Natural killer cell (primary cell): ENCODE measurements at regions of chr22 and their contacts with region 1.

Region 1: DNA sequence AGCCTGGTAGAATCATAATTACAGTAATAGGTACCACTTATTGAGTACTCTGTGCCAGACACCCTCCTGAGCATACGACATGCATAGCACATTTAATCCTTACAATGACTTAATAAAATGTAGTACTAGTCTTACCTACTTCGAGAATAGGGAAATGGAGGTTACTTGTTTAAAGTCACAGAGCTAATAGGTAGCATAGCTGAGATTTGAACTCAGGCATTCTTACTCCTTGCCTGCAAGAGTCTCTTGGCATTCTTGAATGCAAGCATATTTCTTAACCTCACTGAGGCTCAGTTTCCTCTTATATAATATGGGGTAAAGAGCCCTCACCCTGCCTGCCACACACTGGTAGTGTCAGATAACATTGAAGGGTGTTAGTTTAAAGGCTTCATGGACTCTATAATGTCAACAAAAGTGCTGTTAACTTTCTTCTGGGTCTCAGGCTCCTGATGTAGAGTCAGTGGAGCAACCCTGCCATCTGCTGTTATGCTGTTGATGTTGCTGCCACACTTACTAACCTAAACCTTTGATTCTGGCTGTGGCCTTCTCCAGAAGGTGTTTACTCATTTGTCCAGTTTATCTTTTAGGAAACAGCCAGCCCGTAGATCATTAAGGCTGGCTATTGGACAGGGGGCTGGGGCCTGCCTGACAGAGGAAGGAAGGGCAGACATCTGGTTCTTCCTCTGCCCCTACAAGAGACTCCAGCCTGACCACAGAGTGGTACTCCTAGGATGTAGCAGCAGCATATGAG is 18.9 kb downstream of the LIMK2 start:
- DNase-seq: peak; percentile 45 to 84
- ATAC-seq: peak; percentile 84 to 86 (median 84)
- H3K4me3 ChIP-seq: no peak overlapping the region
- H3K4me3 Mint-ChIP-seq: peak overlapping the region; percentile 32
- H3K27ac ChIP-seq: peak overlapping the region; percentile 83
- H3K27ac Mint-ChIP-seq: peak overlapping the region; percentile 85 to 87
- H3K4me1 ChIP-seq: peaks cover 33% of the 10 kb centered on the region
- H3K4me1 Mint-ChIP-seq: peaks cover 32 to 44% of the 10 kb centered on the region in 2 donors
- H3K27me3 ChIP-seq: no peaks in the 10 kb centered on the region
- H3K27me3 Mint-ChIP-seq: no peaks in the 10 kb centered on the region
- CTCF ChIP-seq: peak; percentile 74

Region 2: GRCh38 chr22:30634471-30635233 is 596.4 kb before region 1 on chr22:
- intact Hi-C with region 1: loop called (anchors 1 kb)
- DNase-seq: peak; percentile 85 to 94
- ATAC-seq: peak; percentile 64 to 79 (median 66)
- H3K4me3 ChIP-seq: peak overlapping the region; percentile 49
- H3K4me3 Mint-ChIP-seq: peak overlapping the region; percentile 84
- H3K27ac ChIP-seq: peak overlapping the region; percentile 85
- H3K27ac Mint-ChIP-seq: peak overlapping the region; percentile 92 to 95
- H3K4me1 ChIP-seq: peaks cover 33% of the 10 kb centered on the region
- H3K4me1 Mint-ChIP-seq: peaks cover 7 to 25% of the 10 kb centered on the region in 2 donors
- H3K27me3 ChIP-seq: no peaks in the 10 kb centered on the region
- H3K27me3 Mint-ChIP-seq: no peaks in the 10 kb centered on the region
- CTCF ChIP-seq: peak; percentile 82

Region 3: DNA sequence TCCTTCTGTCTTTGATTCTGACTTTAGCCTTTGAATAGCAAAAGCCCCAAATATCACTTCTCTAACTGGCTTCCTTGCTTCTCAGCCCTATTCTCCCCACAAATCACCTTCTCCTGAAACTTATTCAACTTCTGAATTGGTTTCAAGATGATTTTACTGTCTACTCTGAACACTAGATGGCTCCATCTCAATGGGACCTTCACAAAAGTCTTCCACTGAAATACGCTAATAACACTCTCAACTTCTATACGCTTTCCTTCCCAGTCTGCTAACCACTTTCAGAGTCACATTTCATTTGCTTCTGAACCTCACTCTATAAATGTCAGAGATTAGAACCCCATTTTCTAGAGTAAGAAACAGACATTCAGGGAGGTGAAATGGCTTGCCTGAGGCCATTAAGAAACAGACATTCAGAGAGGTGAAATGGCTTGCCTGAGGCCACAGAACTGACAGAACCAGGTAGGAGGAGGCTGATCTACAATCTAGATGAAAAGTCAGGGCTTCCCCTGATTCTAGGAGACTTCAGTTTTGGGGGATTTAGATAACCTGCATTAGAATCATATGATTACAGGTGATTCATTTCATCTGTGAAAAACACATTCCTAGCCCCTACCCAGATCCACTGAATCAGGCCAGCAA is 283.1 kb before region 1 on chr22:
- intact Hi-C with region 1: loop called (anchors 5 kb)
- DNase-seq: peak in 1 of 2 donors; percentile 66
- ATAC-seq: peak in 2 of 3 donors; percentile 40 to 52
- H3K4me3 ChIP-seq: no peak overlapping the region
- H3K4me3 Mint-ChIP-seq: no peak overlapping the region
- H3K27ac ChIP-seq: no peak overlapping the region
- H3K27ac Mint-ChIP-seq: no peak overlapping the region
- H3K4me1 ChIP-seq: peaks cover 10% of the 10 kb centered on the region
- H3K4me1 Mint-ChIP-seq: peaks cover 22 to 23% of the 10 kb centered on the region in 2 donors
- H3K27me3 ChIP-seq: no peaks in the 10 kb centered on the region
- H3K27me3 Mint-ChIP-seq: no peaks in the 10 kb centered on the region
- CTCF ChIP-seq: peak; percentile 29

Region 4: DNA sequence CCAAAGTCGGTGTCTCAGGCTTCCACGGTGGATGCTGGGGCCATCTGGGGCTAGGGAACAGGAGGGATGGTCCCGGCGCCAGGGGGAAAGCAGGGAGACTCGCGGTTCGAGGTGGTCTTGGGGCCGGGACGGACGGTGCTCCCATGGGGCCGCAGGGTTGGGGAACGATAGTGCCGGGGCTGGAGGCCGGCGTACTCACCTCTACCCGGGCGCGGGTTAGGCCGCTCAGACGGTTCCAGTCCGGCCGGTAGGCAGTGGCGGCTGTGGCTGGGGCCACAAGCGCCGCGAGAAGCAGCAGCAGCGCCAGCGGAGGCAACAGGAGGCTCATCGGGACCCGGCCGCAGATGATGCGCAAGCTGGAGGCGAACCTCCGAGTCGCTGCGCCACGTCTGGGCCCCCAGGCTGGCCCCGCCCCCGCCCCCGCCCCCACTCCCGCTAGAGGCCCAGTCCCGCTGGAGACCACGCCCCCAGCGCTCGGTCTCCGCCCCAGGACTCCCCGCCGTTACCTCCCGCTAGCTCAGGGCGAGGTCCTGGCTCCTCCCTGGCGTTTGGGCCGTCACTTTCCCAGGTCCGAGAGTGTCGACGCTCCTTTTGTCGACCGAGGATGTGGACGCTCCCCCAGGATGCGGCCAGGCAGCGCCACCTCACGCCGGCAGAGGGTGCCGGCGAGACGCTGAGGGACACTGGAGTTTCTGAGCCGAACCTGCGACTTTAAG is 123.7 kb before region 1 on chr22 and contains the start of gene SELENOM:
- intact Hi-C with region 1: loop called (anchors 1 kb)
- DNase-seq: peak; percentile 80 to 94
- ATAC-seq: peak; percentile 94 to 96 (median 96)
- H3K4me3 ChIP-seq: peak within 1 kb of the TSS; percentile 86
- H3K4me3 Mint-ChIP-seq: peak within 1 kb of the TSS; percentile 87
- H3K27ac ChIP-seq: peak within 1 kb of the TSS; percentile 34
- H3K27ac Mint-ChIP-seq: peak within 1 kb of the TSS; percentile 78 to 91
- H3K4me1 ChIP-seq: peaks cover 17% of the 10 kb centered on the region
- H3K4me1 Mint-ChIP-seq: peaks cover 7 to 18% of the 10 kb centered on the region in 2 donors
- H3K27me3 ChIP-seq: no peaks in the 10 kb centered on the region
- H3K27me3 Mint-ChIP-seq: peaks cover 0 to 2% of the 10 kb centered on the region in 2 donors
- CTCF ChIP-seq: peak; percentile 74
- total RNA-seq, gene SELENOM: 8.1 to 14.0 (median 10.6) TPM

Region 5: GRCh38 chr22:31211862-31212730 is 18.9 kb before region 1 on chr22 and contains the start of gene LIMK2:
- intact Hi-C with region 1: loop called (anchors 1 kb)
- DNase-seq: peak; percentile 97 to 98
- ATAC-seq: peak; percentile 98 to 100 (median 99)
- H3K4me3 ChIP-seq: peak within 1 kb of the TSS; percentile 95
- H3K4me3 Mint-ChIP-seq: peak within 1 kb of the TSS; percentile 88
- H3K27ac ChIP-seq: peak within 1 kb of the TSS; percentile 61
- H3K27ac Mint-ChIP-seq: peak within 1 kb of the TSS; percentile 69 to 92
- H3K4me1 ChIP-seq: peaks cover 33% of the 10 kb centered on the region
- H3K4me1 Mint-ChIP-seq: peaks cover 33 to 47% of the 10 kb centered on the region in 2 donors
- H3K27me3 ChIP-seq: no peaks in the 10 kb centered on the region
- H3K27me3 Mint-ChIP-seq: no peaks in the 10 kb centered on the region
- CTCF ChIP-seq: peak; percentile 77
- total RNA-seq, gene LIMK2: 17.2 to 28.6 (median 19.1) TPM

Region 6: GRCh38 chr22:31321421-31321820 is 90.4 kb after region 1 on chr22:
- intact Hi-C with region 1: no loop called
- DNase-seq: no peak
- ATAC-seq: no peak
- H3K4me3 ChIP-seq: no peak overlapping the region
- H3K4me3 Mint-ChIP-seq: no peak overlapping the region
- H3K27ac ChIP-seq: no peak overlapping the region
- H3K27ac Mint-ChIP-seq: no peak overlapping the region
- H3K4me1 ChIP-seq: no peaks in the 10 kb centered on the region
- H3K4me1 Mint-ChIP-seq: no peaks in the 10 kb centered on the region
- H3K27me3 ChIP-seq: no peaks in the 10 kb centered on the region
- H3K27me3 Mint-ChIP-seq: no peaks in the 10 kb centered on the region
- CTCF ChIP-seq: no peak